T-cell (primary cell): ENCODE measurements at regions of chr9 and their contacts with region 1.

Region 1: GRCh38 chr9:137070201-137070905 is at the start of gene SAPCD2:
- DNase-seq: peak; percentile 62 to 90 (median 80)
- ATAC-seq: peak; percentile 88 to 90 (median 89)
- H3K4me3 ChIP-seq: peak within 1 kb of the TSS; percentile 39 to 48
- H3K4me3 Mint-ChIP-seq: peak within 1 kb of the TSS; percentile 68 to 73 (median 68)
- H3K27ac ChIP-seq: no peak within 1 kb of the TSS
- H3K27ac Mint-ChIP-seq: peak within 1 kb of the TSS in 1 of 2 donors; percentile 44
- H3K4me1 ChIP-seq: peaks cover 5 to 28% of the 10 kb centered on the region in 2 experiments
- H3K4me1 Mint-ChIP-seq: peaks cover 12 to 15% (median 14%) of the 10 kb centered on the region in 3 donors
- H3K27me3 ChIP-seq: peaks cover 0 to 19% of the 10 kb centered on the region in 2 experiments
- H3K27me3 Mint-ChIP-seq: peaks cover 3% of the 10 kb centered on the region in 2 donors
- total RNA-seq, gene SAPCD2: 0.33 to 1.0 (median 0.83) TPM

Region 2: GRCh38 chr9:137029058-137029936 is 41.1 kb before region 1 on chr9:
- CTCF ChIA-PET with region 1: interaction called in 1 of 2 experiments, 10 read pairs
- POLR2A ChIA-PET with region 1: no interaction called
- DNase-seq: peak in 29 of 35 experiments; percentile 31 to 80 (median 55)
- ATAC-seq: peak; percentile 19 to 41 (median 24)
- H3K4me3 ChIP-seq: peak overlapping the region; percentile 79 to 81
- H3K4me3 Mint-ChIP-seq: peak overlapping the region; percentile 73 to 79 (median 79)
- H3K27ac ChIP-seq: peak overlapping the region; percentile 59
- H3K27ac Mint-ChIP-seq: peak overlapping the region; percentile 88 to 90
- H3K4me1 ChIP-seq: peaks cover 20 to 91% of the 10 kb centered on the region in 2 experiments
- H3K4me1 Mint-ChIP-seq: peaks cover 41 to 57% (median 49%) of the 10 kb centered on the region in 3 donors
- H3K27me3 ChIP-seq: peaks cover 0 to 13% of the 10 kb centered on the region in 2 experiments
- H3K27me3 Mint-ChIP-seq: no peaks in the 10 kb centered on the region

Region 3: DNA sequence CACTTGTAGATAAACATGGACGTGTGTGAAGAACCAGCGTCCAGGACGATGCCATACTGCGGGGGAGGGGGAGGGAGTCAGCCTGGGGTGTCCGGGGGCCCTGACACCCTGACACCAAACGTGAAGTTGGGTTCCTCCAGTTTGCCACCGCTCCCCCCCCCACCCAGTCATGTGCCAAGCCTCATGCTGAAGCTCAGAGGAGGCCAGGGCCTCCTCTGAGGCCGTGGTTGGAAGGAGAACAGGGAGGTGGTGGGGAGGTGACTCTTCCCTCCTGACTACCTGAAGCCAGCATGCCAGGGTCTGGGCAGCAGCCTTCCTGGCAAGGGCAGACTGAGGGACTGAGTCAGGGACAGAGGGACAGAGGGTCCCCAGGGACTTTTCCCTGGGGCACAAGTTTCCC is 18.1 kb before region 1 on chr9:
- CTCF ChIA-PET with region 1: no interaction called
- POLR2A ChIA-PET with region 1: no interaction called
- DNase-seq: no peak
- ATAC-seq: no peak
- H3K4me3 ChIP-seq: no peak overlapping the region
- H3K4me3 Mint-ChIP-seq: peak overlapping the region in 1 of 3 donors; percentile 46
- H3K27ac ChIP-seq: no peak overlapping the region
- H3K27ac Mint-ChIP-seq: no peak overlapping the region
- H3K4me1 ChIP-seq: peaks cover 2 to 31% of the 10 kb centered on the region in 2 experiments
- H3K4me1 Mint-ChIP-seq: peaks cover 0 to 4% (median 0%) of the 10 kb centered on the region in 3 donors
- H3K27me3 ChIP-seq: peaks cover 3 to 71% of the 10 kb centered on the region in 2 experiments
- H3K27me3 Mint-ChIP-seq: peaks cover 6 to 40% of the 10 kb centered on the region in 2 donors

Region 4: GRCh38 chr9:137086531-137087408 is 16.4 kb after region 1 on chr9 and contains the start of gene MAN1B1:
- CTCF ChIA-PET with region 1: interaction called in 1 of 2 experiments, 11 read pairs
- POLR2A ChIA-PET with region 1: interaction called in 1 of 2 experiments, 3 read pairs
- DNase-seq: peak; percentile 93 to 100 (median 99)
- ATAC-seq: peak; percentile 85 to 90 (median 86)
- H3K4me3 ChIP-seq: peak within 1 kb of the TSS; percentile 67 to 75
- H3K4me3 Mint-ChIP-seq: peak within 1 kb of the TSS; percentile 79 to 93 (median 89)
- H3K27ac ChIP-seq: peak within 1 kb of the TSS; percentile 78
- H3K27ac Mint-ChIP-seq: peak within 1 kb of the TSS; percentile 88 to 94
- H3K4me1 ChIP-seq: peaks cover 13 to 31% of the 10 kb centered on the region in 2 experiments
- H3K4me1 Mint-ChIP-seq: peaks cover 28 to 40% (median 32%) of the 10 kb centered on the region in 3 donors
- H3K27me3 ChIP-seq: peaks cover 0 to 3% of the 10 kb centered on the region in 2 experiments
- H3K27me3 Mint-ChIP-seq: no peaks in the 10 kb centered on the region
- total RNA-seq, gene MAN1B1: 62.0 to 91.5 (median 84.8) TPM